Dendritic cell treated with granulocyte-macrophage colony-stimulating factor and Interleukin-4, amounts not matched to agents 40 ng/mL and 50 ng/mL, for 4 days (primary cell): ENCODE measurements at regions of chr2 and their contacts with region 1.

Region 1: GRCh38 chr2:64144057-64145013 is at the start of gene PELI1:
- H3K4me3 Mint-ChIP-seq: peak within 1 kb of the TSS; percentile 87
- H3K27ac Mint-ChIP-seq: peak within 1 kb of the TSS; percentile 93
- H3K4me1 Mint-ChIP-seq: peaks cover 26% of the 10 kb centered on the region
- H3K27me3 Mint-ChIP-seq: no peaks in the 10 kb centered on the region

Region 2: DNA sequence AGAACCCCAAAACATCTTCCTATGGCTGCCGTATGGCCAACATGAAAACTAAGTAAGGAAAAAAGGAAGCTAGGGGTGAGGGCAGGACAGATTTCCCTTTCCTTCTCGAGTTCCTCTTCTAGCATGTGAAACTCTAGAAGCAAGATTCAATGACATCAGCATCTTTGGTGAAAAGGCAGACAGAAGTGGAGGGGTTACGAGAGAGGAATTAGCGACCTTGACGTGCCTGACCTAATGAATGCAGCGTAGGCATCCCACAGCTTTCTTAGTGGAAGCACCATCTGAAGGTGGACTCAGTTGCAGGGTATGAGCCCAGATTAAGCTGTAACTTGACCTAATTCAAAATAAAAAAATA is 47.8 kb after region 1 on chr2:
- intact Hi-C with region 1: loop called (anchors 5 kb)
- H3K4me3 Mint-ChIP-seq: peak overlapping the region; percentile 17
- H3K27ac Mint-ChIP-seq: peak overlapping the region; percentile 88
- H3K4me1 Mint-ChIP-seq: peaks cover 54% of the 10 kb centered on the region
- H3K27me3 Mint-ChIP-seq: no peaks in the 10 kb centered on the region

Region 3: DNA sequence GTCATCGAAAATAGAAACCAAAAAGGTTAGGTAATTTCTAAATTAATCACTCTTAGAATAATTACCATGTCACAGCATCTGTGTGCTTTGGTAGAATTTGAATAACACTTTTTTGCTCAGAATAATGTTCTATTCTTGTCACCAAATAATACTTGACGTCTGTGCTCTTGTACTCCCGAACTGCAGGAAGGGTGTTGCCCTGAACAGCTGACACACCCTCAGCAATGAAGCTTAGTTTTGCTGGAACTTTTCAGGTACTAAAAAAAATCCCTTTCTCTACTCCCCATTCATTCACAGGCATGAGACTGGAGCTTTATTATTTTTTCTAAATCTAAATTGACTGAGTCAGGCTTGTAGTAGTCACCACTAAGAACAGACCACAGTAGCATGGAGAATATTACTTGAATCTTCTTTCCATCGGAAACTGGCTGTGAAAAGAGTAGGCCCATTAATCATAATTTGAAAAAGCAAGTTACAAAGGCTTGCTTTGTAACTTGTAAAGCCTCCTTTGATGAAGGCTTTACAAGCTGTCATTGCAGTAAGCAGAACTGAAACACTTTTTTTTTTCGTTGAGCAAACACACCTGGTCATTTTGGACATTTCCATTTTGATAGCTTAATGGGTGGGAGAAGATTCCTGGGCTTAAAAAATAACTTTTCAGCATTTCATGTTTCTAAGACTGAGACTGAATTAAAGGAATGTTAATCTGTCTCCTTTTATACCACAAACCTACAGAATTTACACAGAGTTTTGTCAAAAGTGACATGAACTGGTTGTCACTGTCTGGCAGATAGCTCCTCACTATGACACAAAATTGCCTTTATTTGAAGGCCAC is 70.2 kb after region 1 on chr2:
- intact Hi-C with region 1: loop called (anchors 5 kb)
- H3K4me3 Mint-ChIP-seq: no peak overlapping the region
- H3K27ac Mint-ChIP-seq: peak overlapping the region; percentile 56
- H3K4me1 Mint-ChIP-seq: peaks cover 46% of the 10 kb centered on the region
- H3K27me3 Mint-ChIP-seq: no peaks in the 10 kb centered on the region